Sigmoid colon (tissue), 7 donors: ENCODE measurements at regions of chr6 and their contacts with region 1.

Region 1: GRCh38 chr6:111483736-111484632 is 966 bp upstream of the REV3L start:
- DNase-seq: peak; percentile 99
- H3K4me3 ChIP-seq: peak overlapping the region; percentile 80 to 99 (median 93)
- H3K27ac ChIP-seq: peak overlapping the region; percentile 99 to 100 (median 100)
- H3K4me1 ChIP-seq: peaks cover 0 to 37% (median 33%) of the 10 kb centered on the region in 4 donors
- H3K27me3 ChIP-seq: no peaks in the 10 kb centered on the region
- CTCF ChIP-seq: no peak
- EP300 ChIP-seq: peak in 2 of 4 donors; percentile 10 to 34
- POLR2A ChIP-seq: peak; percentile 52

Region 2: GRCh38 chr6:110810896-110811586 is 672.9 kb before region 1 on chr6:
- intact Hi-C with region 1: no loop called
- DNase-seq: no peak
- H3K4me3 ChIP-seq: no peak overlapping the region
- H3K27ac ChIP-seq: no peak overlapping the region
- H3K4me1 ChIP-seq: peaks cover 0 to 17% (median 8%) of the 10 kb centered on the region in 4 donors
- H3K27me3 ChIP-seq: no peaks in the 10 kb centered on the region
- CTCF ChIP-seq: no peak
- EP300 ChIP-seq: no peak
- POLR2A ChIP-seq: no peak

Region 3: DNA sequence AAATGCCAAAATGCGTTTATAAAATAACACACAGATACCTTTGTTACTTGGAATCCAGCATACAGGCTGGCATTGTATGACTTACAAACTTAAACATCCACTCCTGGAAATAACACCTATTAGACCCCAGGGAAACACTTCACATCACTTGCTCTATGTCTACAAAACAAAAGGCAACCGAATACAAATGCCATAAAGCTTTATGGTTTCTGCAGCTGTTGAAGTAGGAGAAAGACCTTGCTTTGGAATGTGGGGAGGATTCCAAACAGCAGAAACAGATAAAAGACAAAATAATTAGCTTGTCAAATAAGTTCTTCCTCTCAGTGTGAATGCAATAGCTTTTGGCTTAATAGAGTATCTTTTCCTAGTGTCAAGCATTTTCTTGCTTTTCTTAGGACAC is 619.2 kb before region 1 on chr6:
- intact Hi-C with region 1: no loop called
- DNase-seq: no peak
- H3K4me3 ChIP-seq: no peak overlapping the region
- H3K27ac ChIP-seq: no peak overlapping the region
- H3K4me1 ChIP-seq: no peaks in the 10 kb centered on the region
- H3K27me3 ChIP-seq: no peaks in the 10 kb centered on the region
- CTCF ChIP-seq: no peak
- EP300 ChIP-seq: no peak
- POLR2A ChIP-seq: no peak

Region 4: DNA sequence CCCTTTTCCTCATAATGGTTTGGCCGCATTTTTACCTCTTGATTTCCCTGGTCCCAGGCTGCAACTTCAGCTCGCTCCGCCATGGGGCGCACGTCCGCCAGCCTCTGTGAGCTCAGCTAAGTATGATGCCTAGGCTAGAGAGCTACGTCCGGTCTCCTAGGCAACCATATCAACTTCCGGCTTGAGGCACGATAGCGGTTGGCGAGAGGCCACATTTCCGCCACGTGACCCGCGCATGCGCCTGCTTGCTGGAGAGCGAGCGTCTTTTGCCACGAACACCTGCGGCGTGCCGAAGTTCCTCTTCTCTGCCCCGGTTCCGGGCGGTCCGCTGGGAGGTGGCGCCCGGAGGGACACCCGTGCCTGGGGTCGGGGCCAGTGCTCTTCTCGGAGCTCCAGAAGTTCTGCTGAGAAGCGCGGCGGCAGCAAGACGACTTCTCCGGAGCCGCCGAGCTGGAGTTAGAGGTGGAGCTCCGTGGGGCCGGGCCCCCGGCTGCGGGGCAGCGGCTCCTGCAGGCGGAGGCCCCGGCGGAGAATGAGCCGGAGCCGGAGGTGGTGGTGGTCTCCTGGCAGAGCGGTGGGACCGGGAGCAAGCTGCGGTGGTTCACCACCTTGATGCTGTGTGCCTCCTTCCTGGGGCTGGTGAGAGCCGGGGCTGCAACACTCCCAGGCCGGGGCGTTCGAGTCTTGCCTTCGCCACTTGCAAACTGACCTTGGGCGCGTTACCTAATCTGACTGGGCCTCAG is 224.7 kb before region 1 on chr6:
- intact Hi-C with region 1: loop called (anchors 2 kb)
- DNase-seq: peak; percentile 99
- H3K4me3 ChIP-seq: peak overlapping the region; percentile 76 to 89 (median 80)
- H3K27ac ChIP-seq: peak overlapping the region; percentile 90 to 95 (median 92)
- H3K4me1 ChIP-seq: peaks cover 0 to 47% (median 17%) of the 10 kb centered on the region in 4 donors
- H3K27me3 ChIP-seq: peaks cover 0 to 6% (median 0%) of the 10 kb centered on the region in 3 donors
- CTCF ChIP-seq: peak; percentile 90 to 99 (median 95)
- EP300 ChIP-seq: peak in 1 of 4 donors; percentile 53
- POLR2A ChIP-seq: peak; percentile 44 to 67

Region 5: DNA sequence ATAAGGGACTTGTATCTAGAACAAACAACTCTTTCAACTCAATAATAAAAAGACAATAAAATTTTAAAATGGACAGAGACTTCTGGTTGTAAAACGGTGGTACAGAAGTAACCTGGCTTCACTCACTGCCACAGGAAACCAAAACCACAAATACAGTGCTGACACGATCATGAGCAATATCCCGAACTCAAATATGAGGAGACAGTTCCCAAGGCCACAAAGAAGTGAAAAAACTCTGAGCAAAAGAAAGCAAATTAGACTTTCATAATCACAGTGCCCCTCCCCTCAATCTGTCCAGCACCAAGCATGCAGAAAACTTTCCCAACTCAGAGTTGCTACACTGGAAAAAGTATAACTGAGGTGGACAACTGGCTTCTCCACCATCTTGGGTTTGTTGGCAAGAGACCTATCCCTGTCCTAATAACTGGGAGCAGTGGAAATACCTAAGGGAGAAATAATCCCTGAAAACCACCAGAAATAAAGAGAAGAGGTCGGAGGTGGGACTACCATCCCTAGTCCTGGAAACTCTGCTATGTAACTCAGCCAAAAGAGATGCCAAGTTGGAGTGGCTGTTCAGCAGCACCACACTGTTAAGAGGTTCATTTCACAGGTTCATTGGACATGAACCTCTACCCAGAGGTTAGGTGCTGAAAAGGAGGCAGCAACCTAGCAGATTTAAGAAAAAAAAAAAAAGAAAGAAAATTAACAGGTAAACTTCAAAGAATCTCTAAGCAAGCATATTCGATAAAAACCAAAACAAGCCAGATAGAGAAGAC is 56.5 kb before region 1 on chr6:
- intact Hi-C with region 1: loop called (anchors 5 kb)
- DNase-seq: no peak
- H3K4me3 ChIP-seq: no peak overlapping the region
- H3K27ac ChIP-seq: peak overlapping the region in 3 of 4 donors; percentile 68 to 79 (median 77)
- H3K4me1 ChIP-seq: peaks cover 0 to 97% (median 77%) of the 10 kb centered on the region in 4 donors
- H3K27me3 ChIP-seq: no peaks in the 10 kb centered on the region
- CTCF ChIP-seq: no peak
- EP300 ChIP-seq: no peak
- POLR2A ChIP-seq: no peak

Region 6: DNA sequence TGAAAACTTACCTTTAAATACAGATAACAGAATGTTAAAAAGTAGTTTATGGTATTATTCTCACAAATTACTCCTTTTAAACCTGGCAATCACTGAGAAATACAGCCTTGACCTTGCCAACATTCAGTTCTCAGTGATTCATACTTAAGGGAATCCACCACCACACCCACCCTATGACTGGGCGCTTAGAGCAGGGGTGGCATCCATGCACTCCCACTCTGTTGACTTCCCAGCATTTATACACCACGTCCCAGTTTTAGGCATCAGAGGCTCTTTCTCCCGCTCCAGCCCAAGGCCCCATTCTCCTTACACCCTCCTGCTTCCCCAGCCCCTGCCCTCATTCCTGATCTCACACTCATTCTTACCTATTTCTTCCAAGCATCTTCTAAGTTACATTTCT is 105.4 kb after region 1 on chr6:
- intact Hi-C with region 1: loop called (anchors 1 kb)
- DNase-seq: no peak
- H3K4me3 ChIP-seq: no peak overlapping the region
- H3K27ac ChIP-seq: peak overlapping the region; percentile 75 to 87 (median 86)
- H3K4me1 ChIP-seq: peaks cover 0 to 71% (median 64%) of the 10 kb centered on the region in 4 donors
- H3K27me3 ChIP-seq: no peaks in the 10 kb centered on the region
- CTCF ChIP-seq: no peak
- EP300 ChIP-seq: no peak
- POLR2A ChIP-seq: no peak

Region 7: DNA sequence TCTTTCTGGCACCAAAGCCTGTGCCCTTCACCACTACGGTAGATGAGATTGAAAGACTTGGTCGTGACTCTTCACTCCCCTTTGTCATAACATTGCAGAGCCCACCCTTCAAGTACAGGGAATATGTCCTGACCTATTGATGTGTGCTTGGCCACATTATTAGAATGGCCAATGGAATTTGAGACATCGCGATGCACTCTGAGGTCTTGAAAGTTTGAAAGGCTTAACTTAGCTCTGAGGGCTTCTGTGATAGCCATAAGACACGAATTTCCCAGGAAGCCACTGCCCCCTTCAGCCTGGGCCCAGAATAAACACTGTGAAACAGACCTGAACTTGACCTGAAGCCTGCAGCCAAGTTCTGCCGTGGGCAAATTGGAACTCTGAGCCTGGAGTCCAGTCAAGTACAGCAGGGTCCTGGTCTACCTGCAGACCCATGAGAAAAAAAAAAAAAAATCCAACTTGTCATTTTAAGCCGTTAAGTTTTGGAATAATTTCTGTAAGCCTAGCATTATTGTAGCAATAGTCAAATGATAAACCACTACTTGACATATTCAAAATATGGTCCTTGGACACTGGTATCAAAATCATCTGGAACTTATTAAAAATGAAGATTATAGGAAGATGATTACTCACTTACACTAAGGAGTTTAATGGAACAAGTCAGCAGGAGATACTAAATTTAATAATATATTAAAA is 158.6 kb after region 1 on chr6:
- intact Hi-C with region 1: loop called (anchors 2 kb)
- DNase-seq: peak; percentile 78
- H3K4me3 ChIP-seq: no peak overlapping the region
- H3K27ac ChIP-seq: no peak overlapping the region
- H3K4me1 ChIP-seq: peaks cover 0 to 16% (median 10%) of the 10 kb centered on the region in 4 donors
- H3K27me3 ChIP-seq: no peaks in the 10 kb centered on the region
- CTCF ChIP-seq: peak; percentile 29 to 59 (median 55)
- EP300 ChIP-seq: no peak
- POLR2A ChIP-seq: no peak

Region 8: DNA sequence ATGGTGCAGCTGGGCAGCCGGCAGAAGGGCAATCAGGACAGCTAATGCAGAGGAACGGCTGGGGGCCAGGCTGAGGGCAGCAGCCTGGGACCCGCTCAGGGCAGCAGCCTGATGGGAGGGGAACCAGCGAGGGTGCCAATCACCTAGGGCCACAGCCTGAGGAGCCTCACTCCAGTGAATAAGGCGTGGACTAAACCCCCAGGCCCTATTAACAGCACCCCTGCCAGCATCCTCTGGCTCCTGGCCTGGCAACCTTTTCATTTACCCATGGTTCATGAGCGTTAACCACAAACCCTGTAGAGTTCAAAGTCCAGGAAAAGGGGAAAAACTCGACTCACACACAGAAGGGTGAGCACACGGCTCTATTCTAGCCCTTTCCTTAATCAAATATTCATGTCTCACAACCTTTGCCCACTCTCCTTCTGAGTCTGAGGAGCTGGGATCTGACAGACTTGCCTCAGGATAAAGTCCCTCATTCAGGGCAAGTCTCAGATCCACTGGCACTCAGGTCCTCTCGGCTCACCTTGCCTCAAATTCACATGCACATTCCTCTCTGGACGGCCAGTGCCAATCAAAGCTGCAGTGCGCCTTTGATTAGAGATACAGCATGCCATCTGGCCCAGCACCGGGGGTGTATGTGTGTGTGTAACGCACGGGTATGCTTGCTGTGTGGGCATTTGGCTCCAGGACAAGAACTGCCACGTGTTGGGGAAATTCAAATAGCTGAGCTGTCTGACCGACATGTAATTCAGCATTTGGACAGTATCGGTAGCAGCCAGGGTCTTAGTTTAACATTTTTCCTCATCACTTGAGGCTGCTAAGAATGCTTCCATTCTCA is 208.6 kb after region 1 on chr6:
- intact Hi-C with region 1: loop called (anchors 5 kb)
- DNase-seq: peak; percentile 69
- H3K4me3 ChIP-seq: no peak overlapping the region
- H3K27ac ChIP-seq: peak overlapping the region in 3 of 4 donors; percentile 74 to 82 (median 78)
- H3K4me1 ChIP-seq: peaks cover 0 to 49% (median 41%) of the 10 kb centered on the region in 4 donors
- H3K27me3 ChIP-seq: no peaks in the 10 kb centered on the region
- CTCF ChIP-seq: no peak
- EP300 ChIP-seq: no peak
- POLR2A ChIP-seq: no peak